Activated CD8-positive, alpha-beta T cell treated with anti-CD3 and anti-CD28 coated beads, Interleukin-2, amount 10 ng/mL, durations not matched to agents 7 days and 5 days (primary cell): ENCODE measurements at regions of chr2 and their contacts with region 1.

Region 1: DNA sequence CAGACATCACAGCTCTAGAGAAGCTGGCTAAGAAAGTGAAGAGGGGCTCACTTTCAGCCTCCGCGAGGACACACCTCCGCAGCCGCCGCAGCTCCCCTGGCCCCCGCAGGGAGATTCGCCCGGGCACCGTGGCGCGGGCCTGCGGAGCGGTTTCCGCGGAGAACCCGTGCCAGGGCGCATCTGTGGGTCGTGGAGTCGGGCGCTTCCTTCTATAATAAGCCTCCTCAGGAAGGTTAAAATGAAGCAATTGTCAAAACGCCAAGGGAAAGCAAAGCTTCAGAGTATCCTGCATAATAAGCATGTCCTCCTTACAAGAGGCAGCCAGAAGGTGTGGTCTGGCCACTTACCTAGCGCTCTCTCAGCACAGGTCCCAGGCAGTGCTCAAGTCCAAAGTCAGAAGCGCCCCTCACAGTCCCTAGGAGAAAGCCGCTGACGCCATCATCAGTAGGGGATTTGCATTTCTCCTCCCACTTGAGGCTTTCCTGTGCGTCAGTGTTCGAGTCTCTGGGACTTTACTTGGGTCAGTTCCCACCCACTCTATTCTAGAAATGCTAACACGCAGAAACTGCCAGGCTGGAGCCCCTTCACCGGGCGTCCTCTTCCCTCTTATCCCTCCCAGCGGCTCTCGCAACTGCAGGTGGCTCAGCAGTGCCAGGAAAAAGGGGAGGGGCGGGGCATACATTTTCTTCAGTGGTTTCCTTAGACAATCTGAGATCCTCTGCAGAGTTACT is at the start of gene STAT4:
- DNase-seq: peak; percentile 91
- ATAC-seq: peak; percentile 86
- H3K4me3 Mint-ChIP-seq: peak within 1 kb of the TSS; percentile 92
- H3K27ac Mint-ChIP-seq: peak within 1 kb of the TSS; percentile 97
- H3K4me1 Mint-ChIP-seq: peaks cover 72% of the 10 kb centered on the region
- H3K27me3 Mint-ChIP-seq: no peaks in the 10 kb centered on the region
- total RNA-seq, gene STAT4: 154 to 157 TPM

Region 2: DNA sequence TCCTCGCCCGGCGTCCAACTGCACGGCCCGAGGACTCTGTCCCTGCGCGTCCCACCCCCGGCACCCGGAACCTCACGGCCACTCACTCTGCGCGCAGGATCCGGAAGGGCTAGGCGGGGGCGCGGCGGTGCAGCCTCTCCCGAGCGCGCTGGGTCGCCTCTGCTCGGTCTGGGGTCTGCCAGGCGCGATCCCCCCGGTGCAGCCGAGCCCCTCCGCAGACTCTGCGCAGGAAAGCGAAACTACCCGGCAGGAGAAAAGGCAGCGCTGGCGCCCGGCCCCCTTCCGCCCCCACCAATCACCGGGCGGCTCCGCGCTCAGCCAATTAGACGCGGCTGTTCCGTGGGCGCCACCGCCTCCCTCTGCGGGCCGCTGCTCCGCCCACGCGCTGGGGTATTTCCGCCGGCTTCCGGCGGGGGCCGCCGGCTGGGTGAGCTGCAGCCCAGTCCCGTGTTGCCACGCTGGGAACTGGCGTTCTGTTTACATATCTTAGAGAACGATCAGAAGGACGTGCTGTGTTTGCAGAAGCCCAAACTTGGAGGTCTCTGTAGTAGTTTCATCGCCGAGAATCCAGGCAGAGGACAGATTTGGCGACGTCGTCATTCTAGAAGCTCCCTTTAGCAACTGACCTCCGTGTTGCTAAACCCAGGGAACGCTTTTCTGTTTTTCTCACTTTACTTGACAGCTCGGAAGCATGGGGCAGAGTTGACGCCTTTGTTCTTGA is 136.7 kb before region 1 on chr2 and contains the start of gene STAT1:
- CTCF ChIA-PET with region 1: interaction called, 13 read pairs
- POLR2A ChIA-PET with region 1: interaction called, 78 read pairs
- DNase-seq: peak; percentile 96
- ATAC-seq: peak; percentile 85
- H3K4me3 Mint-ChIP-seq: no peak within 1 kb of the TSS
- H3K27ac Mint-ChIP-seq: no peak within 1 kb of the TSS
- H3K4me1 Mint-ChIP-seq: peaks cover 38% of the 10 kb centered on the region
- H3K27me3 Mint-ChIP-seq: no peaks in the 10 kb centered on the region
- total RNA-seq, gene STAT1: 472 to 473 TPM

Region 3: DNA sequence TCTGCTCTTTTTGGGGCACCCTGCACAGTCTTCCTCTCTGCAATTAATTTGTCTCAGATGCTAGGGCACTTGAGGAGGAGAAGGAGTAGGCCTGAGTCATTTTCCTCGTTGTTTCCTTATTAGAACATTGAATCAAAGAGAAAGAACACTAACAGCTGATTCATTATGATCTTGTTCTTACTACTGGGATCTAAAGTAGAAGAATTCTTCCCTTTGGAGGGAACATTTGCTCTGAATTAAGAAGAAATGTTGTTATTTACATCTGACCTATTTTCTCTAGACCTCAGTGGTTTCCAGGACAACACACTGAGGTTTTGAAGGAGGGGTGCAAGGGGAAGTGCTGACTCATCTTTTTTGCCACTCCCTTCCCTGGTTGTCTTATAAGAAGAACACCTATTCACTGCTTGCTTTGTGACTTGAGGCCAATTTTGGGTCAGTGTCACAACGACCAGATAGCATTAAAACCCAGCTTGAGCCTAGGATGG is 112.5 kb before region 1 on chr2:
- CTCF ChIA-PET with region 1: interaction called, 29 read pairs
- POLR2A ChIA-PET with region 1: no interaction called
- DNase-seq: peak; percentile 58
- ATAC-seq: peak; percentile 79
- H3K4me3 Mint-ChIP-seq: no peak overlapping the region
- H3K27ac Mint-ChIP-seq: peak overlapping the region; percentile 75
- H3K4me1 Mint-ChIP-seq: peaks cover 34% of the 10 kb centered on the region
- H3K27me3 Mint-ChIP-seq: no peaks in the 10 kb centered on the region

Region 4: GRCh38 chr2:191105082-191105481 is 45.7 kb before region 1 on chr2:
- CTCF ChIA-PET with region 1: interaction called, 10 read pairs
- POLR2A ChIA-PET with region 1: interaction called, 4 read pairs
- DNase-seq: no peak
- ATAC-seq: no peak
- H3K4me3 Mint-ChIP-seq: no peak overlapping the region
- H3K27ac Mint-ChIP-seq: peak overlapping the region; percentile 7
- H3K4me1 Mint-ChIP-seq: peaks cover 50% of the 10 kb centered on the region
- H3K27me3 Mint-ChIP-seq: no peaks in the 10 kb centered on the region

Region 5: GRCh38 chr2:191165176-191165643 is 14.4 kb after region 1 on chr2:
- CTCF ChIA-PET with region 1: interaction called, 31 read pairs
- POLR2A ChIA-PET with region 1: interaction called, 3 read pairs
- DNase-seq: peak; percentile 47
- ATAC-seq: peak; percentile 87
- H3K4me3 Mint-ChIP-seq: no peak overlapping the region
- H3K27ac Mint-ChIP-seq: no peak overlapping the region
- H3K4me1 Mint-ChIP-seq: peaks cover 22% of the 10 kb centered on the region
- H3K27me3 Mint-ChIP-seq: peaks cover 12% of the 10 kb centered on the region

Region 6: GRCh38 chr2:191218292-191218898 is 67.6 kb after region 1 on chr2:
- CTCF ChIA-PET with region 1: interaction called, 18 read pairs
- POLR2A ChIA-PET with region 1: no interaction called
- DNase-seq: peak; percentile 72
- ATAC-seq: peak; percentile 86
- H3K4me3 Mint-ChIP-seq: no peak overlapping the region
- H3K27ac Mint-ChIP-seq: no peak overlapping the region
- H3K4me1 Mint-ChIP-seq: peaks cover 24% of the 10 kb centered on the region
- H3K27me3 Mint-ChIP-seq: no peaks in the 10 kb centered on the region